ENCODE measurements at regions of chr11 and their contacts with region 1.

Region 1: DNA sequence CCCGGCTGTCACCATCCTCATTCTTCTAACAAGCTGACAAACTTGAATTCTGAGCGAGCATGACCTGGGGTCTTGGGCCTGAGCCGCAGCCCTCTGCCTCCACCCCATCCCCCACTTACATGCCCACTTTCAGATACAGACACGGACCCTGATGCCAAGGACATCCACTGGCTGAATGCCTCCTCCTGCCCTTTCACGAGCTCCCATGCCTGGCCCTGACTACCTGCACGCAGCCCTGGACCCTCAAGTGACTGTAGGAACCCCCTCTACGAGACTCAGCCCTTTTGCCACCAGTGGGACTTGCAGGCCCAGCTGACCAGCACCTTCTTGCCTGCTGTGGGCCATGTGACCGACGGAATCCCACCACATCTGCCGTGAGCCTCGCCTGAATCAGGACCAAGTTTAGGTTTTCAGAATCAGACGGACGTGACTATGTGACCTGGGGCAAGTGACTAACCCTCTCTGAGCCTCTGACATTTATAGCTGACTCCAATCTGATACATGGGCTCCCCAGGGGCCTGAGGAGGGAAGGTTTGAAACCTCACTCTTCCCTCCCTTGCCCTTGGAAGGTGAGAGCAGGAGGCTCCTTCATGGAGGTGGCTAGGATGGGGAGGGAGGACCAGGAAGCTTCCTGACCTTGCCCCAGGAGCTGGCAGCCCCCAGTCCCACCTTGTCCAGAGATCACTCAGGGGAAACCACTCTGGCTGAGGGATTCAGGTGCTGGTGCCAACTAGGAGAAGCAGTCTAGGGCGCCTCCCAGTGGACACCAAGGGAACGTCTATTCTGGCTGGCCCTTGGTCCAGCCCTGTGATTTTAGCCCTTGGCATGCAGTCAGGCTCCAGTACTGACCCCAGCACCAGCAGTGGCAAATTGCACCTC is 46.9 kb upstream of the SYT7 start:
- DNase-seq: peak; percentile 68
- H3K4me3 Mint-ChIP-seq: no peak overlapping the region
- H3K27ac Mint-ChIP-seq: no peak overlapping the region
- H3K4me1 Mint-ChIP-seq: no peaks in the 10 kb centered on the region
- H3K27me3 Mint-ChIP-seq: peaks cover 2% of the 10 kb centered on the region

Region 2: DNA sequence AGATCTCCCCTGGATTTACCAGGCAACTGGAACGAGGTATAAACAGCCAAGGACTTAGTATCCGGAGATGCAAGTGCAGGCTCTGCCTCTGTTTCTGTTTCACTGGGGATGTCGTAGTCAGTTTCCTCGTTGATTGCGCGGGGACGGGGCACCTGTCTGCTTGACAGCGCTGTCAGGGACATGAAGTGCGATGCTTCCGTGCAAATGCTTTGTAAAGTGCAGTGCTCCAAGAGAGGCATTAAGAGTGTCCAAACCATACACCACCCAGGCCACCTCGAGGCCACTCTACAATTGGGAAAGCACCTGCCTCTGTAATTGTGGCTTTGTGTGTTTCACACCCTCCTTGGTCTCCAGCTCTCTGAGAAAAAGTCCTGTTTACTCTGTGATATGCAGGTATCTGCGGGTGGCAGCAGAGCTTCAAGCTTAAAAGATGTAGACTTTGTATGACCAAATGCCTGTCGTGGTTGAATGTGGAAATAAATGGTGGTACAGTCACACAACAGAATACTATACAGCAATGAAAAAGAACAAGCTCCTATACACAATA is 544.1 kb before region 1 on chr11:
- CTCF ChIA-PET with region 1: no interaction called
- intact Hi-C with region 1: no loop called
- DNase-seq: peak; percentile 89
- H3K4me3 Mint-ChIP-seq: peak overlapping the region; percentile 76
- H3K27ac Mint-ChIP-seq: peak overlapping the region; percentile 99
- H3K4me1 Mint-ChIP-seq: peaks cover 70% of the 10 kb centered on the region
- H3K27me3 Mint-ChIP-seq: no peaks in the 10 kb centered on the region

Region 3: DNA sequence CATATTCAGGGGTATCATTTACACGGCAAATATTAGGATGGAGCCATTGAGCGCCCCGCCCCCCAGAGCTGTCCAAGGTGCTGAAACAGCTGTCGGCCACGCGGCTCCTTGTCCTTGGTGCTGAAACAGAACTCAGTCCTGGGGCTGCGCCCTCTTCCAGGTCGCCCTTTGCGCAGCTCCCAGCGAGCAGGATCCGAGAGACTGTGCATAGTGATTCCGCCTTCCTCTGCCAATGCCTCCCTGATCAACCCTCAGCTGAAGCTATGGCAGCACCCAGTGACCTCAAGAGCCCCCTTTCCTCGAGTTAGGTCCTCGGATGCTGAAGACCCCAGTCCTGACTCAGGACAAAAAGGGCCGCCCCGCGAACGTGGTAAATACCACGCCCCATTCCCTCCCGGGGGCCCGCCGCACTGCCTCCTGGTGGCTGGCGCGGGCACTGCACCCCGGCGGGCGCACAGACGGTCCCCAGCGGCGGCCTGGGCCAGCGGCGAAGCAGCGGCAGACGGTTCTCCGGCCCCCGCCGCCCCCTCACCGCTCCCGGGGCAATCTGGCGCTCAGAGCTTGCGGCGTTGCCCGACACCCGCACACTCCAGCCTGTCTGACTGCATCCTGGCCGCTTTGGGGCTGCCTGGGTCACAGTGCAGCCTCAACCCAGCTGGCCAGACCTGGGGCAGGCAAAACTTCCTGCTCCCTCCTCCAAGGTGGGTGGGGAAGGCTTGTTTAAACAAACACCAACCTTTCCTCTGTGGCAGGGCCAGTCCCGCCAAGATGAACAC is 60.3 kb before region 1 on chr11:
- CTCF ChIA-PET with region 1: no interaction called
- intact Hi-C with region 1: no loop called
- DNase-seq: peak; percentile 87
- H3K4me3 Mint-ChIP-seq: no peak overlapping the region
- H3K27ac Mint-ChIP-seq: no peak overlapping the region
- H3K4me1 Mint-ChIP-seq: peaks cover 1% of the 10 kb centered on the region
- H3K27me3 Mint-ChIP-seq: peaks cover 43% of the 10 kb centered on the region

Region 4: GRCh38 chr11:61587521-61588453 is 40.0 kb before region 1 on chr11:
- CTCF ChIA-PET with region 1: interaction called, 4 read pairs
- intact Hi-C with region 1: loop called (anchors 5 kb)
- DNase-seq: peak; percentile 70
- H3K4me3 Mint-ChIP-seq: peak overlapping the region; percentile 53
- H3K27ac Mint-ChIP-seq: no peak overlapping the region
- H3K4me1 Mint-ChIP-seq: peaks cover 12% of the 10 kb centered on the region
- H3K27me3 Mint-ChIP-seq: peaks cover 10% of the 10 kb centered on the region

Region 5: GRCh38 chr11:61728940-61729219 is 101.1 kb after region 1 on chr11:
- CTCF ChIA-PET with region 1: no interaction called
- intact Hi-C with region 1: no loop called
- DNase-seq: no peak
- H3K4me3 Mint-ChIP-seq: no peak overlapping the region
- H3K27ac Mint-ChIP-seq: no peak overlapping the region
- H3K4me1 Mint-ChIP-seq: peaks cover 2% of the 10 kb centered on the region
- H3K27me3 Mint-ChIP-seq: no peaks in the 10 kb centered on the region

Region 6: GRCh38 chr11:61769169-61769920 is 141.5 kb after region 1 on chr11:
- CTCF ChIA-PET with region 1: no interaction called
- intact Hi-C with region 1: no loop called
- DNase-seq: no peak
- H3K4me3 Mint-ChIP-seq: no peak overlapping the region
- H3K27ac Mint-ChIP-seq: no peak overlapping the region
- H3K4me1 Mint-ChIP-seq: peaks cover 1% of the 10 kb centered on the region
- H3K27me3 Mint-ChIP-seq: no peaks in the 10 kb centered on the region

Measured in activated naive CD4-positive, alpha-beta T cell treated with anti-CD3 and anti-CD28 coated beads for 36 hours (primary cell).